ENCODE measurements at regions of chr17 and their contacts with region 1.

Region 1: GRCh38 chr17:45161019-45161825 is 453 bp upstream of the HEXIM2 start:
- DNase-seq: peak; percentile 97
- ATAC-seq: peak; percentile 97

Region 2: GRCh38 chr17:44738214-44738906 is 422.9 kb before region 1 on chr17:
- intact Hi-C with region 1: no loop called
- DNase-seq: no peak
- ATAC-seq: no peak

Region 3: GRCh38 chr17:45148183-45149036 is 12.8 kb before region 1 on chr17 and contains the start of gene HEXIM1:
- intact Hi-C with region 1: loop called in 1 of 2 experiments (anchors 1 kb)
- DNase-seq: peak; percentile 99
- ATAC-seq: peak; percentile 75 to 81
- total RNA-seq, gene HEXIM1: 27.8 to 31.7 TPM

Measured in left cardiac atrium (tissue), 4 donors.